ENCODE measurements at regions of chr2 and their contacts with region 1.

Region 1: DNA sequence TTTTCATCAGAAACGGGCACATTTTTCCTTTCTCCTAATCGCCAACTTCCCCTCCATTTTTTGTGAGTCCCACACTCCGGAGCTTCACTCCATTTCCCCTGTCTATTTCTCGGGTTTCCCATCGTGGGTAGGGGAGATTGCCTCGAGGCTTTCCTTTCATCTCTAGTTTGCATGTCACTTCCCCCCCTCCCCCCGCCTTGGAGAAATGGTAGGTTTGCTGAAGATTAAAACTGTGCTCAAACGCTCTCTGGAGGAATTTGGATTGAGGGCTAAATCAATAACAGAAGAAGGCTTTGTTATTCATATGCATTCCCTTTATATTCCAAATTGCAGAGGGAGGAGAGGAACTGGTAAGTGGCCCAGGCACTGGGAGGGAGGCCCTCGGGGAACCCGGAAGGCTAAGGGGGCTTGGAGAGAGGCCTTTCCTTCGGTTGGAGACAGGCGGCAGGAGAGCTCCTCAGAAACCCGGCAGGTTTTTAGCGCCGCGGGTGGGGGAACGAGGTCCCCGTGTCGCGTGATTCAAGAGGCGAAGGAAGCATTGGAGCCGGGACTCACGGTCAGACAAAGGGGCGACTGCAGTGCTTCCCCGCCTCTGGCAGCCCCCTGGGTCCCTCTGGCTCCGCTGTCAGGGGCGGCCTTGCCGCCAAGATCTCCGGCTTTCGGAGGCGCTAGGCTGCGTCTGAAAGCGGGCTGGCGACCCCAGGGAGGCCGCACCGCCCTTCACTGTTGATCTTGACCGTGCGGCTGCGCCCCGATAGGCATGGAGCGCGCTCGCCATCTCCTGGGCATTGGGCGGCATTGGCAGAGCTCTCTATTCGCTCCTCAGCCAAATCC is 2.4 kb upstream of the HOXD12 start:
- DNase-seq: peak; percentile 62
- ATAC-seq: peak; percentile 98
- H3K4me3 ChIP-seq: peak overlapping the region; percentile 52 to 87
- H3K27ac ChIP-seq: peak overlapping the region; percentile 75
- H3K4me1 ChIP-seq: peaks cover 13% of the 10 kb centered on the region
- H3K27me3 ChIP-seq: peaks cover 5% of the 10 kb centered on the region
- CTCF ChIP-seq: peak; percentile 96

Region 2: DNA sequence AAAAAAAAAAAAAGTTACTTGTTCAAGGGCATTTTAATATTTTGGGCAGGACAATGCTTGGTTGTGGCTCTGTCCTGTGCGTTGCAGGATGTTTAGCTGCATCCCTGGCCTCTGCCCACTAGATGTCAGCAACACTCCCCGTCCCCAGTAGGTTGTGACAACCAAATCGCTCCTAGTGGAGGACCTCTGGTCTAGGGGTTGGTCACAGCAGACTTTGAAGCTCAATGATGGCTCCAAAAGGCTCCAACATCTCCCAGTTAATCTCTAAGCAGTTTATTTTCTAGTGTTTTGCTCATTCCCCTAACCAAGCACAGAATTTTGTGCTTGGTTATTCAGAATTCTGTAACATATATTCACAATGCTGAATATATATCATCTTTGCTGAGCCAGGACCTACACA is 1399.9 kb before region 1 on chr2:
- CTCF ChIA-PET with region 1: interaction called, 7 read pairs
- POLR2A ChIA-PET with region 1: no interaction called
- in situ Hi-C with region 1: no loop called
- intact Hi-C with region 1: loop called (anchors 5 kb)
- DNase-seq: peak; percentile 59
- ATAC-seq: peak; percentile 97
- H3K4me3 ChIP-seq: no peak overlapping the region
- H3K27ac ChIP-seq: no peak overlapping the region
- H3K4me1 ChIP-seq: no peaks in the 10 kb centered on the region
- H3K27me3 ChIP-seq: no peaks in the 10 kb centered on the region; the same call in 1 of the 2 replicates
- CTCF ChIP-seq: peak; percentile 94

Region 3: GRCh38 chr2:174771631-174772471 is 1325.4 kb before region 1 on chr2:
- CTCF ChIA-PET with region 1: no interaction called
- POLR2A ChIA-PET with region 1: no interaction called
- in situ Hi-C with region 1: no loop called
- intact Hi-C with region 1: loop called (anchors 5 kb)
- DNase-seq: peak; percentile 47
- ATAC-seq: peak; percentile 99
- H3K4me3 ChIP-seq: peak overlapping the region in 1 of 2 experiments; percentile 44; a peak in 3 of 4 replicates
- H3K27ac ChIP-seq: peak overlapping the region; percentile 48; the same call in 1 of the 2 replicates
- H3K4me1 ChIP-seq: peaks cover 9% of the 10 kb centered on the region
- H3K27me3 ChIP-seq: no peaks in the 10 kb centered on the region
- CTCF ChIP-seq: peak; percentile 87

Region 4: GRCh38 chr2:175233135-175233719 is 864.0 kb before region 1 on chr2:
- CTCF ChIA-PET with region 1: interaction called, 14 read pairs
- POLR2A ChIA-PET with region 1: no interaction called
- in situ Hi-C with region 1: no loop called
- intact Hi-C with region 1: no loop called
- DNase-seq: no peak
- ATAC-seq: no peak
- H3K4me3 ChIP-seq: no peak overlapping the region
- H3K27ac ChIP-seq: no peak overlapping the region
- H3K4me1 ChIP-seq: no peaks in the 10 kb centered on the region
- H3K27me3 ChIP-seq: no peaks in the 10 kb centered on the region; the same call in 1 of the 2 replicates
- CTCF ChIP-seq: no peak

Region 5: DNA sequence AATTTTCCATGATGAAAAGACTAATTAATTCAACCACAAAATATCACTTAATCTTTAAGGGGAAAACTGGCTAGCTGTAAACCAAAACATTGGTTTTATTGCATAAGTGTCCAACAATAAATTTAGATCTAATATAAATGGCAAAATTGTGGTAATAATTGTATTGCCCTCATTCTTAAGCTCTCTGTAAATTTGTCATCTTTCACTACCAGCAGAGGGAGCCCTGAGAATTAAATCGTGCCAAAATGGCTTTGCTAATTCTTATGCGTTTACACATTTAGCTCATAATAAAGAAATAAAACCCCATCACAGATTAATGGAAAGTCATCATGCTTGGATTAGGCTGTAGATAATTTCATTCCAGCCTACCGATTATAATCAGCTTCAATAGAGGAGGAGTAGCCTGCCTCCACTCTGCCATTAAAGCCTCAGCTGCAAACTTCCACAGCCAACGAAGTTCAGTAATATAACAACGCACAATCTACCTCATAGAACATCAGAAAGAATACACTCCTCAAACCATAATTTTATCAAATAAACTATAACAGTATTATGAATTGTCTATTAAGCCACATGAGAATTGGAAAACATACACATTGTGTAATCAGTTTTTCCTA is 845.7 kb before region 1 on chr2:
- CTCF ChIA-PET with region 1: interaction called, 10 read pairs
- POLR2A ChIA-PET with region 1: no interaction called
- in situ Hi-C with region 1: no loop called
- intact Hi-C with region 1: loop called (anchors 5 kb)
- DNase-seq: peak; percentile 24
- ATAC-seq: no peak; the same call in 1 of the 2 replicates
- H3K4me3 ChIP-seq: no peak overlapping the region
- H3K27ac ChIP-seq: no peak overlapping the region
- H3K4me1 ChIP-seq: no peaks in the 10 kb centered on the region
- H3K27me3 ChIP-seq: peaks cover 2% of the 10 kb centered on the region; the same call in 1 of the 2 replicates
- CTCF ChIP-seq: peak; percentile 78; the same call in 1 of the 2 replicates

Region 6: DNA sequence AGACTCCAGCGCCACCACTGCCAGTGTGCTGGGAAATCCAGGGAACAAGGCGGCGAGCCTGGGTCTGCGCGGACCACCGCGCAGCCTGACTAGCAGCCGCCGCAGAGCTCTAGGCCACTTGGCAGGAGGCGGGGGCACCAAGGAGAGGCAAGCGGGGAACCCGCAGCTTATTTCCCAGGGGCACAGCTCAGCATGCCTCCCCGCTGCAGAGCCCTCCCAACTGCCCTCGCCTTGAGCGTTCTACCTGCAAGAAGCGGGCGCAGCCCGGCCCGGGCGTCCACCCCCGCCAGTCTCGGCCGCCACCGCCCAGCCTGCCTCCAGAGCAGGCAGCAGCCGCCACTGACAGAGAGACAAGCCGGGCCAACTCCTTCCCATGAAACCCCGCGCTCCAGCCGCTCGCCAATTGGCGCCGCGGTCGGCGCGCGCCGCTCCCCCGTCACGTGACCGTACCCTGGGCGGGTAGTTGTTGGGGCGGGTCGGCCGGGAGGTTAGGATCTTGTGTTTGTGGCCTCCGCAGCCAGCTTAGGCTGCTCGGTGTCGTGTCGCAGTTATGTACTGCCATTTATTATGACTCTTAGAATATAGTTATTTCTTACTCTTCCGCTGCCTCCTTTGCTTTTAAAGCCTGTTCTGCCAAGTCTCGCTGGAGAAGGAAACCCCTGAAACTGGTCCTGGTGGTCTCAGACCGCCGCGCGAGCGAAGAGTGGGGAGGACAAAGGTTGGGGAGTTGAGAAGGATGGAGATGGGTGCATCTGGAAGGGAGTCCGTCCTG is 95.1 kb before region 1 on chr2 and contains the start of gene LNPK:
- CTCF ChIA-PET with region 1: no interaction called
- POLR2A ChIA-PET with region 1: no interaction called
- in situ Hi-C with region 1: no loop called
- intact Hi-C with region 1: no loop called
- DNase-seq: peak; percentile 43
- ATAC-seq: peak; percentile 99
- H3K4me3 ChIP-seq: peak within 1 kb of the TSS; percentile 88 to 98
- H3K27ac ChIP-seq: peak within 1 kb of the TSS; percentile 73
- H3K4me1 ChIP-seq: peaks cover 13% of the 10 kb centered on the region
- H3K27me3 ChIP-seq: no peaks in the 10 kb centered on the region
- CTCF ChIP-seq: no peak
- total RNA-seq, gene LNPK: 27.3 TPM

Measured in Panc1 (cell line).